Mammary epithelial cell (primary cell): ENCODE measurements at regions of chr9 and their contacts with region 1.

Region 1: DNA sequence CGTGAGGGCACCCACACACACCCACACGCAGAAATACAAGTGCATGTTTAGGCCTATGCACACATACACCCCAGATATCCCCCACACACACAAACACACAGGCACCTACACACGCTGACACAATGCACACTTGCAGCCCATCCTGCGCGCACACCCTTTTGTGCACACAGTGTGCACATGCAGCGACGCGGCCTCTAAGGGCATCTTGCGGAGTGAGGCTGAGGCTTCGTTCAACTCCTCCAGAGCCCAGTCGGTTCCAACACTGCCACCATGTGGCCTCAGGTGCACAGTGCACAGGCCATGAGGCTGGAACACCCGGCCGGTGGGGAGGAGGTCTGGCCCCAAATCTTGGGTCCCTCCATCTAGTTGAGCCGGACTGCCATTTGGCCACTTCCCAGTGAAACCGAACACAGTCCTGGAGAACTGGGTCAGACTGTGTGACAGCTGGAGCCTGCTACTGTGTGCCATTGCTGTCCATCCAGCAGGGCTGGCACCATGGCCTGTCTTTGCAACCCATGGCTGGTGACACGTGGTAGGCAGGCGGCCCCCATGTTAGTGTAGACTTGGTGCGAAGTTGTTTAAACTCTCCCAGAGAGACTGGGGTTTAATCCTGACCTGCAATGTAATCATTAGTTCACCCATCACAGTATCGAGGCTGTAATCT is 97.7 kb upstream of the MVB12B start:
- DNase-seq: peak; percentile 45
- H3K4me3 ChIP-seq: no peak overlapping the region
- H3K27ac ChIP-seq: no peak overlapping the region
- H3K4me1 ChIP-seq: no peaks in the 10 kb centered on the region
- H3K27me3 ChIP-seq: no peaks in the 10 kb centered on the region
- CTCF ChIP-seq: peak; percentile 97 to 98

Region 2: GRCh38 chr9:125255781-125256391 is 973.0 kb before region 1 on chr9:
- CTCF ChIA-PET with region 1: no interaction called
- dilution Hi-C with region 1: no loop called
- in situ Hi-C with region 1: no loop called
- intact Hi-C with region 1: loop called (anchors 10 kb)
- DNase-seq: no peak
- H3K4me3 ChIP-seq: no peak overlapping the region
- H3K27ac ChIP-seq: no peak overlapping the region
- H3K4me1 ChIP-seq: no peaks in the 10 kb centered on the region
- H3K27me3 ChIP-seq: no peaks in the 10 kb centered on the region
- CTCF ChIP-seq: peak; percentile 24 to 31

Region 3: GRCh38 chr9:125601961-125602360 is 627.0 kb before region 1 on chr9:
- CTCF ChIA-PET with region 1: no interaction called
- dilution Hi-C with region 1: no loop called
- in situ Hi-C with region 1: no loop called
- intact Hi-C with region 1: loop called (anchors 1 kb)
- DNase-seq: no peak
- H3K4me3 ChIP-seq: no peak overlapping the region
- H3K27ac ChIP-seq: no peak overlapping the region
- H3K4me1 ChIP-seq: no peaks in the 10 kb centered on the region
- H3K27me3 ChIP-seq: no peaks in the 10 kb centered on the region
- CTCF ChIP-seq: peak in 1 of 2 donors; percentile 21

Region 4: DNA sequence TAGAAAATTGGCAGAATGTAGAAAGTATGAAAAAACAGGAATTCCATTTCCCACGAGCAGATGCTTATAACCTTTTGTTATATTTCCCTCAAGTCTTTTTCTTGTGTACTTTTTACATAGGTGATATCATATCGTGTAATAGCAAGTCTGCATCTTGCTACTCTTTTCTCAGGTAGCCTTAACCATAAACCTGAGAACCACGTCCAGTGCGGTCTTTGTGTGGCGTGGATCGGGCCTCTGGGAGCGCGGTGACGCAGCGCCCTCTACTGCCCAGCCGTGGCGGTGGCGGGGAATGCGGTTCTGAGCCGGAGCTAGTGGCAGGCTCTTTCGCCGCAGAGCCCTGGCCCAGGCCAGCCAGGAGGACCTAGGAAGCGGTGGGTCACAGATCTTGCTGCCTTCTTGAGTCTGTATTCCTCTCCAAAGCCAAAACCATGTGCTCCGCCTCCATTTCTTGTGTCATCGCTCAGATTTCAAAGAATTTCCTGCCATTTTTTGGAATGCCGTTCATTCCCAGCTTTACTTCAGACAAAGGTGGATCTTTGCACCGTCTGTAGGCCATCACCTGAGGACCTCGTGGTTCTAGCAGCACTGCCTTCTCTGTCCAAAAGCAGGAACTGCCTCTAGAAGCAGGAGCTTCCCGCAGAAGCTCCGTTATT is 169.6 kb after region 1 on chr9:
- CTCF ChIA-PET with region 1: no interaction called
- dilution Hi-C with region 1: no loop called
- in situ Hi-C with region 1: no loop called
- intact Hi-C with region 1: loop called (anchors 1 kb)
- DNase-seq: peak; percentile 46
- H3K4me3 ChIP-seq: no peak overlapping the region
- H3K27ac ChIP-seq: no peak overlapping the region
- H3K4me1 ChIP-seq: peaks cover 13% of the 10 kb centered on the region
- H3K27me3 ChIP-seq: no peaks in the 10 kb centered on the region
- CTCF ChIP-seq: peak; percentile 93 to 100